ENCODE measurements at regions of chr7 and their contacts with region 1.

Region 1: GRCh38 chr7:128343554-128344430 is at the start of gene RBM28:
- DNase-seq: peak; percentile 96
- H3K4me3 ChIP-seq: peak within 1 kb of the TSS; percentile 87
- H3K27ac ChIP-seq: peak within 1 kb of the TSS; percentile 72
- H3K4me1 ChIP-seq: peaks cover 19% of the 10 kb centered on the region
- CTCF ChIP-seq: no peak
- total RNA-seq, gene RBM28: 35.6 and 64.6 TPM in 2 replicates

Region 2: GRCh38 chr7:128387216-128388144 is 43.7 kb after region 1 on chr7:
- CTCF ChIA-PET with region 1: interaction called, 18 read pairs
- POLR2A ChIA-PET with region 1: interaction called, 3 read pairs
- intact Hi-C with region 1: loop called (anchors 1 kb)
- DNase-seq: peak; percentile 77
- H3K4me3 ChIP-seq: no peak overlapping the region
- H3K27ac ChIP-seq: no peak overlapping the region
- H3K4me1 ChIP-seq: no peaks in the 10 kb centered on the region
- CTCF ChIP-seq: peak; percentile 88

Region 3: DNA sequence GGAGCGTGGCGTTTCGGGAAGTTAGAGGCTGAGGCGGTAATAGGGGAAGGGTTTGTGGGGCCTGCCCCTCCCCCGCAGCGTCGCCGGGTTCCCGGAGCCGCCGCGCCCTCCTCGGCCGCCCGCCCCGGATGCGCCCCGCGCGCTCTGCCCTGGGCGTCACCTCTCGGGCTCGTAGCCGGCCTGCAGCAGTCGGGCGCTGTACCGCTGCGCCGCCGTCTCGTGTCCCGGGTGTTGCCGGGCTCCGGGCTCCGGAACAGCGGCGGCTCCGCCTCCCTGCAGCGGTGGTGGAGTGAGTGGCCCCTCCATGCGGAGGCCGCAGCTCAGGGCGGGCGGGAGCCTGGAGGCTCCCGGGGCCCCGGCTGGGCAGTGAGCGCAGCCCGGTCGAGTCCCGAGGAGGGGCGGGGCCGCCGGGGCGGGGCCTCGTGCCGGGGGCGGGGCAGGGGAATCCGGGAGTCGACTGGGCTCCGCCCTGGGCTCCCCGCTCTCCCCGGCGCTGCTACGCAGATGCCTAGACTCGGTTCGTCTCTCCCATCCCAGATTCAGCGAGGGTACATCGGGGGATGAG is 65.9 kb after region 1 on chr7 and contains the start of gene IMPDH1:
- CTCF ChIA-PET with region 1: no interaction called
- POLR2A ChIA-PET with region 1: no interaction called
- intact Hi-C with region 1: loop called (anchors 1 kb)
- DNase-seq: peak; percentile 57
- H3K4me3 ChIP-seq: peak within 1 kb of the TSS; percentile 72
- H3K27ac ChIP-seq: no peak within 1 kb of the TSS
- H3K4me1 ChIP-seq: peaks cover 10% of the 10 kb centered on the region
- CTCF ChIP-seq: no peak
- total RNA-seq, gene IMPDH1: 23.3 and 26.6 TPM in 2 replicates

Region 4: GRCh38 chr7:128425850-128426249 is 82.1 kb after region 1 on chr7:
- CTCF ChIA-PET with region 1: interaction called, 4 read pairs
- POLR2A ChIA-PET with region 1: interaction called, 3 read pairs
- intact Hi-C with region 1: loop called (anchors 1 kb)
- DNase-seq: peak; percentile 63
- H3K4me3 ChIP-seq: no peak overlapping the region
- H3K27ac ChIP-seq: no peak overlapping the region
- H3K4me1 ChIP-seq: no peaks in the 10 kb centered on the region
- CTCF ChIP-seq: peak; percentile 93

Region 5: DNA sequence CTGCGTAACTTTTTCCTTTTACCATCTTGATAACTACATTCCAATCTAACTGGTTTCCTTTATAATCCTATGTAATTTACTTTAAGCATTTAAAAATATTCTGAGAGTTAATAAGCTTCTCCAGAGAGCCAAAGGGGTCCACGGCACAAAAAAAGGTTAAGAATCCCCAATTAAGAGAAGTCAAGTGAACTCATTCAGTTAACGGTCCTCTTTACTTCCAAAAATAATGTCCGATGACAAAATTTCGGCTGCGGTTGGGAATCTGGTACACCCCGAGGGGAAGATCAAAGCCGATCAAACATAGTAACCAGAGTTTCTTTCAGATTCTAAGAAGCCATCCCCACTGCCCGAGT is 1707.0 kb after region 1 on chr7:
- CTCF ChIA-PET with region 1: no interaction called
- POLR2A ChIA-PET with region 1: no interaction called
- intact Hi-C with region 1: loop called (anchors 10 kb)
- DNase-seq: no peak
- H3K4me3 ChIP-seq: peak overlapping the region; percentile 78
- H3K27ac ChIP-seq: peak overlapping the region; percentile 52
- H3K4me1 ChIP-seq: peaks cover 18% of the 10 kb centered on the region
- CTCF ChIP-seq: no peak